GM13976 (cell line): ENCODE measurements at regions of chr5 and their contacts with region 1.

Region 1: GRCh38 chr5:151825445-151825844 is 53.7 kb downstream of the G3BP1 start:
- DNase-seq: peak; percentile 41
- CTCF ChIP-seq: peak; percentile 76

Region 2: DNA sequence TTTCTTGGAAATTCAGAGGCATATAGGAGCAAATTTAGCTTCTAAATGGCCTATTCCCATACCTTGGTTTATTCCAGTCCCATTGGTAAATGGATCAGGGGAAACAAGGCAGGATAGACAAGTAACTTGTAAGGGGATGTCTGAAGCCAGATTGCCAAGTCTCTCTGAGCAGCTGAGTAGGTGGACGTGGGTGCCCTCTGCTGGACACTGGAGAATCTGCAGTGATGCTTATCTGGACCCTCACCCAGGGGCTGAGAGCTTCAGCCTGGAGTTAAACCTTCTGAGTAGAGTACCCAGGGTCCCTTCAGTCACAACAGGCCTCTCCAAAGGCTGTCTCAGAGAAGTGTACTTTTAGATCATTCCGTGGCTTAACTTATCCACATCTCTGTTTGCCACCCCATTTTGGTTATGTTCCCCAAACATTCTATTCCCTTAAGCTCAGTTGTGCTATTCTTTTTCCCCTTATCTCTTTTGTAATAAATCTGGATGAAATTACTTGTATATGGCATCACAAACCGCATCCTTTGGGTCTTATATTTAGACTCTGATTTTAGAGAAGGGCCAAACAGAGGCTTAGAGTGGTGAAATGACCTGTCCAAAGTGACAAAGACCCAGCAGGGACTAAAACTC is 317.5 kb after region 1 on chr5:
- in situ Hi-C with region 1: loop called (anchors 10 kb)
- DNase-seq: peak; percentile 47
- CTCF ChIP-seq: peak; percentile 88

Region 3: DNA sequence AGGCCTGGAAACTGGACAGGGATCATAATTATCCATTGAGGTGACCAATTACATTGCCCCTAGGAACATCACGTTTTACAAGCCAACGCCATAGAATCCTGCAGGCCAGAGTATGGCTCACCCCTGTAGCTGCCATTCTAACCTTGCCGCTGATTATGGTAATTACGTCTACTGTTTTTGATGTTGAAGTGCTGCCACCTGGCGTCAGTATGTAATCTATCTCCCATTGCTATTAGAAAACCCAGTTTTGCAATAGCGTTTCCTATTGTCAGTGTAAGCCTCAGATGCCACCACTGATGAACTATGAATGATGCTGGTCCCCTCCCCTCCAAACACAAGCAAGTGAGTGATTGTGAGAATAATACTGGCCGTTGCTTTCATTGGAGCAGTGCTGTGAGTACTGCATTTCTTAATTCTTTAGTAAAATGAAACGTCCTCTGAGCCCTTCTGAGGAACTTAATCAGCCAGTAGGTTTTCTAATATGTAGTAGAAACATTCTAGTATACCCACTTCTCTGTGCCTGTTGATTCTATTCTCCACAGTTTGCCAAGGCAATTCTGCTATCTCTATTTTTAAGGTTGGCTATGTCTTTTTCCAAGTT is 680.1 kb after region 1 on chr5:
- in situ Hi-C with region 1: loop called (anchors 25 kb)
- DNase-seq: peak; percentile 43
- CTCF ChIP-seq: peak; percentile 39